GM18951 (cell line): ENCODE measurements at regions of chr10 and their contacts with region 1.

Region 1: DNA sequence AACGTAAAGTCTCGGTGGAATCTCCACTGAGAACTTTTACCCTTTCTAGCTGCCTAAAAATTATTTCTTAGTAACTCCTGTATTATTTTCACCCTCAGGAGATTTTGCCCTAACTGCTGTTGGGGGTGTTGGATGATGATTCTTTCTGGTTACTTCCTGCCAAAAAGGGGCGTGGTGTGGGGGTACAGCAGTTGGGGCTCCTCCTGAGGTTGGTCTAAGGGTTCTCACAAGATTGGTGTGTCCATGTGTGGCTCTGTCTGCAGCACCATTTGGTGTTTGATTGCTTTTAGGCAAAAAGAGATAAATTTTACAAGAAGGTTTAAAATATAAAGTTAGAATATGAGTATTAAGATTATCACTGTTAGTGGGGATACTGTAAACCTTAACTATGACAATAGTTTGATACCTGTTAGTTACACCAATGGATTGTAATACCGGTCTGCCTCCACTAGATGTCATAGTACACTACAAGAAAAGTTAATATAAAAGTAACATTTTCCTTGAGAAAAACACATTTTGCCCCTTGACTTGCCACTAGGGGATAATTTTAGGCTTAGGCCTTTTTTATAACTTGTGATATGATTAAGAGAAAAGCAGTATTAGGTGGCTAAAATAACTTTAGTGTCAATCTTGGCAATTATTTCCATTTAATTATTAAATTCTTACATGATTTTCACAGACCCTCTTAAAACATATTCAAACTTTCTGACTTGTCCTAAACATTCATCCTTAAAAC is 928.7 kb downstream of the IPMK start:
- POLR2A ChIP-seq: no peak

Region 2: DNA sequence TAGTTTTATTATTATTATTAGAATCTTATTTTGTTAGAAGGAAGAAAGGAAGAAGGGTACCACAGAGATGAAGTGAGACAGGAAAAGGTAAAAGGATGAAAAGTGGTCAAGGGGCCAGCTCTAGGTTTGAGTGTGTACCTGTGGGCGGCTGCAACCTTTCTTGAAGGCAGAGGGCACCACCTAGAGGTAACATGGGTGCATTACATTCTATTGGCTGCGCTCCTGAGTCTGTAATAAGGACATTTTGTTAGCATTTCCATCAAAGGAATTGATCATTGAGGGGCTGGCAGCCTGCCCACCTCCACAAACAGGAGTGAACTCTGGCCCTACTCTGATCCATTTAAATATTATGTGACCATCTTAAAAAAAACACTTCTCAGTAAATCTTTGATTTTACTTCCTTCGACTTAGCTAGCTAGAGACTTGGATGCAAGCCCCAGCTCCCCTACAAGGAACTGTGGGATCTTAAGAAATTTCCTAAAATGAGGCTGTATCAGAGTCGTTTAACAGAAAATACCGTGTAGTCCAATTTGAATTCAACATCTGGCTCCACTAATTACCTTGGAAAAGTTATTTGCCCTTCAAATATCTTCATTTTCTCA is 318.3 kb after region 1 on chr10:
- in situ Hi-C with region 1: loop called (anchors 25 kb)
- POLR2A ChIP-seq: no peak

Region 3: GRCh38 chr10:57696641-57697040 is 357.6 kb after region 1 on chr10:
- in situ Hi-C with region 1: no loop called
- POLR2A ChIP-seq: no peak